HAP-1 (cell line): ENCODE measurements at regions of chr3 and their contacts with region 1.

Region 1: GRCh38 chr3:11379233-11379823 is 107.1 kb downstream of the ATG7 start:
- DNase-seq: peak; percentile 20 to 65
- H3K4me3 ChIP-seq: no peak overlapping the region
- H3K4me1 ChIP-seq: peaks cover 27% of the 10 kb centered on the region
- H3K27me3 ChIP-seq: no peaks in the 10 kb centered on the region

Region 2: DNA sequence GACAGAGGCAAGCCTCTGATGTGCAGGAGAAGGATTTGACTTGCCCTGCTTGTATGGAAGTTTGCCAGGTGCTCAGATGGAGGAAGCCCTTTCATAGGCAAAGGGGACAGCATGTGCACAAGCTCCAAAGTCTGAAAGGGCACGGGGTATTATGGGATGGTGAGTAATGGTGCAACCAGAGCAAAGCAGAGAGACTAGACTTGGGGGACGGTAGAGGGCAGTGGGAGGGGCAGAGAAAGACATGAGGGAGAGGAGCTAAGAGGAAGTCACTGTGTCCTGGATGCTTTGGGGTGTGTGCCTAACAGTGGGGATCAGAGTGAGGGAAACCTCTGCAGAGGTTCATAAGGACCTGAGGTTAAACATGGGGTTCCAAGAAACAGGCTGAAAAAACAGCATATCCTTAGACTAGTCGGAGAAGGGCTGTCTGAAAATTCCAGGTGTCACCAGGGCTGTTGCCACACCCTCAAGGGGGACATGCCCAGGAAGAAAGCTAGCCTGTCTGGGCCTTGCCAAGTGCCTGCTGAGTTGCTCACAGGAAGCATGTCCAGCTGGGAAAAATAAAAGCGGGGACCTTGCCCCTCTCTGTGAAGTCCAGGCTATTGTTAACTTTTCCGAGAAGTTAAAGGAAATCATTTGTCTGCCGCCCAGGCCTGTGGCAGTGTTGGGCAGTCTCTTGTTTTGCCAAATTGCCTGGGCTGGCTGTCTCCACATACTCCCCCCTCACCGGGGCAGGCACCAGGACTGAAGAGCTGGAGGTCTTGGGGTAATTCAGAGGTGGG is 177.9 kb before region 1 on chr3:
- in situ Hi-C with region 1: no loop called
- DNase-seq: no peak
- H3K4me3 ChIP-seq: no peak overlapping the region
- H3K4me1 ChIP-seq: no peaks in the 10 kb centered on the region
- H3K27me3 ChIP-seq: no peaks in the 10 kb centered on the region

Region 3: GRCh38 chr3:11523572-11524101 is 144.3 kb after region 1 on chr3:
- in situ Hi-C with region 1: no loop called
- DNase-seq: no peak
- H3K4me3 ChIP-seq: no peak overlapping the region
- H3K4me1 ChIP-seq: no peaks in the 10 kb centered on the region
- H3K27me3 ChIP-seq: no peaks in the 10 kb centered on the region

Region 4: GRCh38 chr3:11803977-11804892 is 424.9 kb after region 1 on chr3:
- in situ Hi-C with region 1: loop called (anchors 10 kb)
- DNase-seq: peak; percentile 52 to 58
- H3K4me3 ChIP-seq: no peak overlapping the region
- H3K4me1 ChIP-seq: no peaks in the 10 kb centered on the region
- H3K27me3 ChIP-seq: no peaks in the 10 kb centered on the region